ENCODE measurements at regions of chr6 and their contacts with region 1.

Region 1: GRCh38 chr6:139375232-139376016 is 976 bp upstream of the CITED2 start:
- DNase-seq: peak; percentile 90 to 93 (median 91)
- H3K4me3 ChIP-seq: peak overlapping the region; percentile 96
- H3K27ac ChIP-seq: peak overlapping the region; percentile 93 to 95
- H3K4me1 ChIP-seq: peaks cover 4% of the 10 kb centered on the region
- H3K27me3 ChIP-seq: no peaks in the 10 kb centered on the region
- CTCF ChIP-seq: no peak
- EP300 ChIP-seq: no peak
- POLR2A ChIP-seq: peak; percentile 54

Region 2: DNA sequence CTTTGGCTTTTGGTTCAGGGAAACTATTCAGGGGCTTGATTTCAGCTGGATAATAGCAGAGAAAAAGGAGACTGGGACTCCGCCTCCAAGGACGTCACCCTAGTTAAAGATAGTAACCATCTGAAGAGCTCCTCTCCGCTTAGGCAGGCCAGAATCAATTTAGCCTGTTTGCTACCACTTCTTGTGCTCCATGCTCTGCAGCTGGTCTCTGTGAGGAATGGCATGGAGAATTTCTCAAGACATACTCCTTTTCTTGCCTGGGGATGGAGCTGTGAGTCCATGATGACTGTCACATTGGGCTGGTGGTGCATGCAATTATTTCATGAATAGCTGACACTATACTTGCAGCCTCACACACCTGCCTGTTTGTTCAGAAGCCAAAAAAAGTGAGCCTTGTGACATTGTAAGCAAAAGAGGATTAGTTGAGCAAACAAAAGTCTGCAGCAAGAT is 145.0 kb before region 1 on chr6:
- intact Hi-C with region 1: no loop called
- DNase-seq: no peak
- H3K4me3 ChIP-seq: no peak overlapping the region
- H3K27ac ChIP-seq: no peak overlapping the region
- H3K4me1 ChIP-seq: no peaks in the 10 kb centered on the region
- H3K27me3 ChIP-seq: no peaks in the 10 kb centered on the region
- CTCF ChIP-seq: no peak
- EP300 ChIP-seq: no peak
- POLR2A ChIP-seq: no peak

Region 3: DNA sequence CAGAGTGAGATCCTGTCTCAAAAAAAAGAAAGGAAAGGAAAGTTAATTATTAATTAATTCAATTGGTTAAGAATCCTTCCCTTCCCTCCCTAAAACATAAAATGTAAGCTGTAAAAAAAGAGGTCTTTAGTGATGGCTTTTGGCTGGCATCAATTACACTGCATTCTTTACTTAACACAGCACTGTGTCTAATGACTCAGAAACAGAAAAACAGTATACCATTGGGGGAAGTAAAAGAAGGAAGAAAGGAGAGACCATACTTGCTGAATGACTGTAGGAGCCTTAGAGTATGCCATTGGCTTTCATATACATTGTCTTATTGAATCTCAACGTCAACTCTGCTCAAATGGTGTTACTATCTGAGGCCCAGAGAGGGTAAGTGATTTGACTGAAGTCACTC is 17.4 kb after region 1 on chr6:
- intact Hi-C with region 1: no loop called
- DNase-seq: no peak
- H3K4me3 ChIP-seq: no peak overlapping the region
- H3K27ac ChIP-seq: no peak overlapping the region
- H3K4me1 ChIP-seq: no peaks in the 10 kb centered on the region
- H3K27me3 ChIP-seq: no peaks in the 10 kb centered on the region
- CTCF ChIP-seq: no peak
- EP300 ChIP-seq: no peak
- POLR2A ChIP-seq: no peak

Region 4: GRCh38 chr6:139433631-139434419 is 58.4 kb after region 1 on chr6:
- intact Hi-C with region 1: no loop called
- DNase-seq: no peak
- H3K4me3 ChIP-seq: no peak overlapping the region
- H3K27ac ChIP-seq: no peak overlapping the region
- H3K4me1 ChIP-seq: no peaks in the 10 kb centered on the region
- H3K27me3 ChIP-seq: no peaks in the 10 kb centered on the region
- CTCF ChIP-seq: no peak
- EP300 ChIP-seq: no peak
- POLR2A ChIP-seq: no peak

Region 5: DNA sequence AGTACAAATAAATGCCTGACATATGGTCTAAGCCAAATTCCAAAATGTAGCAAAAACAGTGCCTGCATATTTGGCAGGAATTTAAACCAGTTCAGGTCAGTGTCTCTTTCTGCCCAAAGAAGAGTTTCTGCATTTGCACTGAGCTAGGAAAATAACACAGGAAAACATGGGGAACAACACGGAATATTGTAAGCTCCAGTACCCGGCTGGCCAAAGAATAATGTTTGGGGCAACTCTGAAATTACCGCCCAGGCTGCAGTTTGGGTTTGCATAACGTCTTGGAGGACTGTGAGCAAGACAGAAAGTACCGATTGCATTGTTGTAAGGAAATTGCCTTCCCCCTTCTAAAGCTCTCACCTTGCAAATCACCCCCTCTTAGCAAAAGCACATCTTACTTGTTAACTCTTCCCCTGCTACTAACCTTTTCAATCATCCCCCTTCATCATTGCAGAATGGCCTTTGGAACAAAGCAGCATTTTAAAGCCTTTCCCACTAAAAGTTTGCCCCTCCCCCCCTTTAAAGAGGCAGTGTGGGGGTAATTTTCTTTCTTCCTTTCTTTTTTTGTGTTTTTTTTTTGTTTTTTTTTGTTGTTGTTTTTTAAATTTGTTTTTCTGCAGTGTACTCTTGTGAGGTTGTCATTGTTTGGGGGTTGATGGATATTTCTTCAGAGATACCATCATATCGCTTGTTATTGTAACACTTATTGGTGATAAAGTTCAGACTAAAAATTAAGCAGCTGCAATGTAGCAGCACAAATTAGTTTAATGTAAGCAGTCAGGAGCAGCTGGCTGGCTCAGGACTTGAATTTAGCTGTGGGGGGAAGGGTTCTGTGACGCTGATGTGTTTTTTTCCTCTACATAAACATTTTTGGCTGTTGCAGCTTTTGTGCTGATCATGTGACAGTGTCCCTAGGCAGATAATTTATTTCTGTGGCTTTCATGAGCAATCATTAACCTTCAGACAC is 99.0 kb after region 1 on chr6:
- intact Hi-C with region 1: loop called in 1 of 4 experiments (anchors 10 kb)
- DNase-seq: peak in 2 of 5 donors; percentile 37 to 40
- H3K4me3 ChIP-seq: no peak overlapping the region
- H3K27ac ChIP-seq: peak overlapping the region in 1 of 2 donors; percentile 83
- H3K4me1 ChIP-seq: peaks cover 8% of the 10 kb centered on the region
- H3K27me3 ChIP-seq: no peaks in the 10 kb centered on the region
- CTCF ChIP-seq: no peak
- EP300 ChIP-seq: no peak
- POLR2A ChIP-seq: no peak

Region 6: GRCh38 chr6:139508023-139508422 is 132.6 kb after region 1 on chr6:
- intact Hi-C with region 1: no loop called
- DNase-seq: no peak
- H3K4me3 ChIP-seq: no peak overlapping the region
- H3K27ac ChIP-seq: no peak overlapping the region
- H3K4me1 ChIP-seq: peaks cover 2% of the 10 kb centered on the region
- H3K27me3 ChIP-seq: no peaks in the 10 kb centered on the region
- CTCF ChIP-seq: no peak
- EP300 ChIP-seq: no peak
- POLR2A ChIP-seq: no peak

Region 7: DNA sequence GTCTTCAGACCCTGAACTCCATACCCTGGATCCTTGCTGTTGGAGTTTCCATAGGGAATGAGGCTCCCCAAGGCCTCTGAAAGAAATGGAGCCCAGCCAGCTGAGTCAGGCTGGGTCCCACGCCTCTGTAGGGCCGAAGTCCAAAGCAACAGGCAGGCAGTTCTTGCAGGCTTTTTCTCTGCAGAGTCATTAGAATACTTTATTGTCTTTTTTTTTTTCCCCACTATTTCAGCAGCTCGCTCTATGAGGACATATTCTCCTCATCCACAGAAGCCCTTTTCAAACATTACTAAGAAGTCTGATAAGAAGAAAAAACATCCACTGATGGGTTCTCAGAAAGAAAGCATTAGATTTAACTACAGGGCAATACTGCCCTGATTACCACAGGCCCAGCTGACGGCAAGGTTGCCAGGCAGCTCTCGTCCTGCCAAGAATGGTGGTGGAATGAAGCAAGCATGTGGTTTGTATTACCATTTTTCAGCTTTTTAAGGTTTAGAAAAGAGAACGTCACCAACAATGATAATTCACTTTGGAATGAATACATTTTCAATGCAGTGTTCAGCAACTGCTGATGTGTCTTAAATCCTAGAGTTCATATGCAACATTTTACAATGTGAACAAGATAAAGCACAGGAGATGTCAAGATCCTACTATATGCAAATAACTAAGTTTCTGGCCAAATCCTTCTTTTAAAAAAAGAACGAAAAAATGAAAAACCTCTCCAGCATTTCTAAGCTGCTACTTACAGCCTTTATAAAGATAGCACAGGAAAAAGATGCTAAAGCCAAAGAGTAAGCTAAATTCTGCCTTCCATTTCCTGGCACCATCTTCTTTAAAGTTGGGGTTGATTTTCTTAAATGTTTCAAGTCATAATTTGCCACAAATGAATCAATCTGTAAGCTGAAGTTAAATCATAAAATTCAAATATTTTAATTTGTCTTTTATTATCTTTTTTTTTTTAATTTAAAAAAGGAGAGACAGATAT is 222.6 kb after region 1 on chr6:
- intact Hi-C with region 1: loop called in 3 of 4 experiments (anchors 5 to 10 kb)
- DNase-seq: peak; percentile 81 to 87 (median 86)
- H3K4me3 ChIP-seq: no peak overlapping the region
- H3K27ac ChIP-seq: peak overlapping the region in 1 of 2 donors; percentile 56
- H3K4me1 ChIP-seq: peaks cover 1% of the 10 kb centered on the region
- H3K27me3 ChIP-seq: no peaks in the 10 kb centered on the region
- CTCF ChIP-seq: no peak
- EP300 ChIP-seq: no peak
- POLR2A ChIP-seq: no peak

Region 8: DNA sequence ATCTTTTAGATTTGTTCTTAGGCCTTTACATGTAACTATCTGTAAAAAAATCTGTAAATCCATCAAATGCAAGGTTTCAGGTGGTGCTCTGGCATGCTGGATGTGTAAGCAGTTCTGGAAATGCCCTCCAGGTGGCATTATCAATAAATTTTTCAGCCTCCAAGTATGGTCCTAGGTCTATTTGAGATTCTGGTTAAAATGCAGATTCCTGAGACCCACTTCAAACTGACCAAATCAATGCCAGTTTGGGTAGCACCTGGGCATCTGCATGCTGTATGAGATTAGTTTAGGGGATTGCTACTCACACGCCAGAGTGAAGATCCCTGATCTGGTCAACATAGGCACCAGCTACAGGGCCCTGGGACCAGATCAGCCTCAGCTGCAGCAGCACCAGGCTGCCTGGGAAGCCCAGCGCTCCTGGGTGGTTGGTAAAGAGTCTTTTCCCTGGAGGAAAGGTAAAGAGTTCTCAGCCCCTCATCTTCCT is 506.3 kb after region 1 on chr6:
- intact Hi-C with region 1: loop called in 1 of 4 experiments (anchors 10 kb)
- DNase-seq: peak in 1 of 5 donors; percentile 26
- H3K4me3 ChIP-seq: no peak overlapping the region
- H3K27ac ChIP-seq: peak overlapping the region in 1 of 2 donors; percentile 35
- H3K4me1 ChIP-seq: peaks cover 4% of the 10 kb centered on the region
- H3K27me3 ChIP-seq: no peaks in the 10 kb centered on the region
- CTCF ChIP-seq: peak in 2 of 3 donors; percentile 12 to 18
- EP300 ChIP-seq: no peak
- POLR2A ChIP-seq: no peak

Region 9: DNA sequence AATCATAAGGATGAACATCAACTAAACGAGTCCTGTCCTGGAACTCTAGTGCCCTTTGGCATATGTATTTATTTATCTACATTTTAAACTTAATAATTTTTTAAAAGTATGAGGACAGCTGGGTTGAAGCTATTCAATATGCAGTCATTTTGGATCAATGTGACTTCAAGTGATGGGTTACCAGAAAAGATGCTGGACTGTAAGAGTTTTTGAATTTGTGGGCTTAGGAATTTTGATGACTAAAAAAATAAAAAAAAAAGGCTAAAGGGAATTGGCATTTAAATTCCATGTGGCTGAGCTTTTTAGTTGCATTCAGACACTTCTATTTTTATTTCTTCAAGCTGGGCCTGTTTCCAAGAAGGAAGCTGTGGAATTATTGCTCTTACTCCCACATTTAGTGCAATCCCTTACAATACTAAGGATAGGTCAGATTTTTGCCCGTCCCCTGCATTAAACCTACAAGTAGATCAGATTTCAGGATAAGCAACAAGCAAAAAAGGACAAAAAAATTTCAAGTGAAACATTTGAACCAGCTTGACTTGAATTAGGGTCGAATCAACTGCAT is 703.2 kb after region 1 on chr6:
- intact Hi-C with region 1: loop called in 2 of 4 experiments (anchors 2 to 10 kb)
- DNase-seq: no peak
- H3K4me3 ChIP-seq: no peak overlapping the region
- H3K27ac ChIP-seq: peak overlapping the region; percentile 60 to 61
- H3K4me1 ChIP-seq: no peaks in the 10 kb centered on the region
- H3K27me3 ChIP-seq: no peaks in the 10 kb centered on the region
- CTCF ChIP-seq: no peak
- EP300 ChIP-seq: no peak
- POLR2A ChIP-seq: no peak

Region 10: DNA sequence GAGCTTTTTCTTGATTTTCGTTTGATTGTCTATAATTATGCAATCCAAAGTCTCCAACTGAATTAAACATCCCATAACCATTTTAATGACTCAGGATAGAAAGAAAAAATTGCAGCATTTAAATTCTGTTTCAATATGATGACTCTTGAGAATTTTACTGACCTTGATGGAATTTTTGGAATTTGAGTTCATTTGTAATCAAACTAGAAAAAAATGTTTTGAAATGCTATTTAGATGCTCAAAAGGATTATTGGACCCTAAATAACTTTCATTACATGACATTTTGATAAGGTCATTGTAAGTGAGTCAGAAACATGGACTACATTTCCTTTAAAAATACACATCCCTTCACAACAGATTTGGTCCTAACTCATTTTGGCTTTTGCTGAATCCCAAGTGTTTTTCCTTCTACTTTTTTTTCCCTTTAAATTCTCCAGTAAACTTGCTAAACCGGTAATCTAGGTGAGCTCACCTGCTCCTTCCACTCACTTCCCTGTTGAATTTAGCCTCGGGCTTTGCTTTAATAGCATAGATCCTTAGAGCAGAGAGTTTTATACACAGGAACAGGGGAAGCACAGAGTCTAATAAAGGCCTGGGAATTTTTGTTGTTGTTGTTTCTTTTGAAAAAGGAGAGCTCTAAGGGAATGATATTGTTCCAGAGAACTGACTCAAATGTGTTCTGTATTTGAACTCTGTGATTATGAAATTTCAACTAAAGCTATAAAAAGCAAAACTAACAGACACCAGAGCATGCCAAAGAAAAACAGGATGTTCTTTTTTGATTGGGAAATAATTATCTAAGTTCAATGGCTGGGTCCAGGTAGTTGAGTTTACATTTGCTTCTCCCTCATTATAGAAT is 1087.3 kb after region 1 on chr6:
- intact Hi-C with region 1: loop called in 2 of 4 experiments (anchors 10 kb)
- DNase-seq: no peak
- H3K4me3 ChIP-seq: no peak overlapping the region
- H3K27ac ChIP-seq: peak overlapping the region; percentile 39 to 75
- H3K4me1 ChIP-seq: peaks cover 10% of the 10 kb centered on the region
- H3K27me3 ChIP-seq: no peaks in the 10 kb centered on the region
- CTCF ChIP-seq: no peak
- EP300 ChIP-seq: no peak
- POLR2A ChIP-seq: peak; percentile 3